Ovary (tissue), 10 donors: ENCODE measurements at regions of chr15 and their contacts with region 1.

Region 1: GRCh38 chr15:23532019-23532418 is 33.5 kb upstream of the MKRN3 start:
- DNase-seq: no peak
- H3K4me3 ChIP-seq: no peak overlapping the region
- H3K27ac ChIP-seq: no peak overlapping the region
- H3K4me1 ChIP-seq: no peaks in the 10 kb centered on the region
- H3K27me3 ChIP-seq: no peaks in the 10 kb centered on the region
- CTCF ChIP-seq: no peak
- EP300 ChIP-seq: no peak
- POLR2A ChIP-seq: no peak

Region 2: GRCh38 chr15:23095796-23096195 is 436.2 kb before region 1 on chr15:
- intact Hi-C with region 1: loop called in 1 of 4 experiments (anchors 10 kb)
- DNase-seq: no peak
- H3K4me3 ChIP-seq: no peak overlapping the region
- H3K27ac ChIP-seq: no peak overlapping the region
- H3K4me1 ChIP-seq: no peaks in the 10 kb centered on the region
- H3K27me3 ChIP-seq: no peaks in the 10 kb centered on the region
- CTCF ChIP-seq: no peak
- EP300 ChIP-seq: no peak
- POLR2A ChIP-seq: no peak

Region 3: DNA sequence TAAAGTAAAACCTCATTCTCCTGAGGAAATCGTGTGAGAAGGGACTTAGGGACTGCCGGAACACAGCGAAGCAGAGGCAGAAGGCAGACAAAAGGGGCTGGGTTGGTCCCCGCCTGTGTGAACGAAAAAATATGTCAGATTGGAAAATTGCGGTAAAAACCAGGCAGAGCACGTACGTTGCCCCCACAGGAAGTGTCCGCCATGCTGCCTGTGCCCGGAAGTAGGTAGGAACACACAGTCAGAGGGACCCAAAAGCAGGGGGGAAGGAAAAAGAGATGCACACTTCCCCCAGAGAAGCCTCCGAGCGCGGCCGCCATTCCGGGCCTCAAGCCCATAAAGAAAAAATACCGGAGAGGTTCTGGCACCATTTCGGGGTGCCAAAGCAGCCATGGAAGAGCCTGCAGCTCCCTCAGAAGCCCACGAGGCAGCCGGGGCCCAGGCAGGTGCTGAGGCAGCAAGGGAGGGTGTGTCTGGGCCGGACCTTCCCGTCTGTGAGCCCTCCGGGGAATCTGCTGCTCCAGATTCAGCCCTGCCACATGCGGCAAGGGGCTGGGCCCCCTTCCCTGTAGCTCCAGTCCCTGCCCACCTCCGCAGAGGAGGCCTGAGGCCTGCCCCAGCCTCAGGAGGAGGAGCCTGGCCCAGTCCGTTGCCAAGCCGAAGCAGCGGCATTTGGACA is 33.5 kb after region 1 on chr15 and contains the start of gene MKRN3:
- intact Hi-C with region 1: no loop called
- DNase-seq: peak in 1 of 5 donors; percentile 34
- H3K4me3 ChIP-seq: peak within 1 kb of the TSS; percentile 18
- H3K27ac ChIP-seq: no peak within 1 kb of the TSS
- H3K4me1 ChIP-seq: no peaks in the 10 kb centered on the region
- H3K27me3 ChIP-seq: no peaks in the 10 kb centered on the region
- CTCF ChIP-seq: no peak
- EP300 ChIP-seq: no peak
- POLR2A ChIP-seq: no peak
- total RNA-seq, gene MKRN3: 0.48 to 2.2 (median 1.3) TPM in 4 of 7 donors, not detected in the others